ENCODE measurements at regions of chr2 and their contacts with region 1.

Region 1: GRCh38 chr2:146124741-146125140 is 1604.8 kb upstream of the ZEB2 start:
- DNase-seq: peak; percentile 62
- H3K4me3 ChIP-seq: no peak overlapping the region
- H3K27ac ChIP-seq: no peak overlapping the region
- H3K4me1 ChIP-seq: peaks cover 25% of the 10 kb centered on the region
- H3K27me3 ChIP-seq: no peaks in the 10 kb centered on the region
- CTCF ChIP-seq: no peak

Region 2: GRCh38 chr2:146024212-146024743 is 100.5 kb before region 1 on chr2:
- CTCF ChIA-PET with region 1: no interaction called
- POLR2A ChIA-PET with region 1: no interaction called
- intact Hi-C with region 1: no loop called
- DNase-seq: no peak
- H3K4me3 ChIP-seq: no peak overlapping the region
- H3K27ac ChIP-seq: no peak overlapping the region
- H3K4me1 ChIP-seq: no peaks in the 10 kb centered on the region
- H3K27me3 ChIP-seq: no peaks in the 10 kb centered on the region
- CTCF ChIP-seq: no peak

Region 3: DNA sequence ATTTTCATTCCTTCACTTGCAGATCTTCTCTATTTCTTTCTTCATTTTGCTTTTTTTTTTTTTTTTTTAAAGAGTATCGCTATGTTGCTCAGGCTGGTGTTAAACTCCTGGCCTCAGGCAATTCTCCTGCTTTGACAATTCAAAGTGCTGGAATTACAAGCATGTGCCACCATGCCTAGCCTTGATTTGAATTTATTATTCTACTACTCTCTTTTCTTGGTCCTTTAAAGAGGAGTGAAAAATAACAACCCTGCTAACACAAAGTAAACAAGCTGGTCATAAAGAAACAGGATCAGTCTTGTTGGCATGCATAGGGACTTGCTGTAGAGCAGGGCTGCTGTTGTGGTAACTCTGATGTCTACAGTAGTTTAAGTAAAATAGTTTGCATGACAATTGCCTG is 10.5 kb after region 1 on chr2:
- CTCF ChIA-PET with region 1: no interaction called
- POLR2A ChIA-PET with region 1: interaction called, 12 read pairs
- intact Hi-C with region 1: no loop called
- DNase-seq: no peak
- H3K4me3 ChIP-seq: no peak overlapping the region
- H3K27ac ChIP-seq: no peak overlapping the region
- H3K4me1 ChIP-seq: no peaks in the 10 kb centered on the region
- H3K27me3 ChIP-seq: no peaks in the 10 kb centered on the region
- CTCF ChIP-seq: no peak

Region 4: DNA sequence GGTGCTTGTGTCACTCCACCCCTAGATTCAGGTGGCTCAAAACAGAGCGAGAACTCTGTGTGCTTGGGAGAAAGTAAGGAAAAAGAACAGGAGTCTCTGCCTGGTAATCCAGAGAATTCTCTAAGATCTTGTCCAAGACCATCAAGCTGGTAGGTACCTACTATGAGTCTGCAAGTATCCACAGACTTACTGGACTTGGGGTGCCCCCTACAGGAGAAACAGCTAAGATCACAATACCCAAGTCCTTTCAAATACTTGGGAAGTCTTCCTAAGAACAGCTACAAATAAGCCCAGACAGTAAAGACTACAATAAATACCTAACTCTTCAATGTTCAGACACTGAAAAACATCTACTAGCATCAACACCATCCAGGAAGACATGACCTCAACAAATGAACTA is 576.4 kb after region 1 on chr2:
- CTCF ChIA-PET with region 1: no interaction called
- POLR2A ChIA-PET with region 1: no interaction called
- intact Hi-C with region 1: no loop called
- DNase-seq: peak; percentile 57
- H3K4me3 ChIP-seq: no peak overlapping the region
- H3K27ac ChIP-seq: no peak overlapping the region
- H3K4me1 ChIP-seq: no peaks in the 10 kb centered on the region
- H3K27me3 ChIP-seq: no peaks in the 10 kb centered on the region
- CTCF ChIP-seq: peak; percentile 43

Measured in A673 (cell line).